HEK293 (cell line): ENCODE measurements at regions of chr11 and their contacts with region 1.

Region 1: DNA sequence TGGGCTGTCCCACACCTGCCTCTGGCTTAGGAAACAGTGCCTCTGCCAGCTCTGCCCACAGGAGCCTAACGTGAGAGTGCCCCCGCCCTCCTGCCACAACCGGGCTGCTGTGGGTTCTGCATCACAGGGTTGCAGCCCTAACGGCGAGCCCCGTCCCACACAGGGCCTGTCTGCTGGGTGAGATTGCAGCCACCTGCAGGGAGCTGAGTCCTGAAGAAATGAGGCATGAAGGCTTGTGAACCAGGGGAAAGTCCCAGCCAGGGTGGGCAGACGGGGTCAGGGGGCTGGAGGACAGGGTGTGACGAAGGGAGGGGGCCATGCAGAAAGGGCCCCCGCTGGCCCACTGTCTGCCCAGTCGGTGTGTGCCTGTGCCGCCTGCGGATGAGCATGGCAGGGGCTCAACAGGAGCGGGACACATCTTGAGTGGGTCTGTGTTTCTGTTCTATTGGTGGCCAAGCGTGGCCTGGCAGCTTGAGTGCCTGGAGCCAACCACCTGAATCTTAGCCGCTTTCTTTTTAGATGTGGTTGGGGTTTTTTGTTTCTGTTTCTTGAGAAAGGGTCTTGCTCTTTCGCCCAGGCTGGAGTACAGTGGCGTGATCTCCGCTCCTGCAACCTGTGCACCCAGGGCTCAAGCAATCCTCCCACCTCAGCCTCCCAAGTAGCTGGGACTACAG is 38.9 kb downstream of the CTTN start:
- H3K4me3 ChIP-seq: no peak overlapping the region
- H3K27ac ChIP-seq: no peak overlapping the region
- H3K4me1 ChIP-seq: no peaks in the 10 kb centered on the region
- CTCF ChIP-seq: no peak

Region 2: GRCh38 chr11:70454197-70454767 is 17.0 kb after region 1 on chr11:
- CTCF ChIA-PET with region 1: interaction called, 6 read pairs
- POLR2A ChIA-PET with region 1: interaction called, 10 read pairs
- H3K4me3 ChIP-seq: no peak overlapping the region
- H3K27ac ChIP-seq: no peak overlapping the region
- H3K4me1 ChIP-seq: no peaks in the 10 kb centered on the region
- CTCF ChIP-seq: no peak